ENCODE measurements at regions of chr1 and their contacts with region 1.

Region 1: GRCh38 chr1:209248649-209249279 is 334.8 kb upstream of the CAMK1G start:
- DNase-seq: peak in 1 of 2 donors; percentile 38
- ATAC-seq: peak in 3 of 8 donors; percentile 41 to 62 (median 45)
- H3K4me3 ChIP-seq: no peak overlapping the region
- H3K27ac ChIP-seq: no peak overlapping the region
- H3K4me1 ChIP-seq: no peaks in the 10 kb centered on the region
- H3K27me3 ChIP-seq: peaks cover 0 to 24% (median 3%) of the 10 kb centered on the region in 7 donors
- CTCF ChIP-seq: peak; percentile 87 to 96 (median 91)

Region 2: GRCh38 chr1:209213989-209214388 is 34.8 kb before region 1 on chr1:
- intact Hi-C with region 1: loop called in 2 of 10 experiments (anchors 5 kb)
- DNase-seq: no peak
- ATAC-seq: no peak
- H3K4me3 ChIP-seq: no peak overlapping the region
- H3K27ac ChIP-seq: no peak overlapping the region
- H3K4me1 ChIP-seq: no peaks in the 10 kb centered on the region
- H3K27me3 ChIP-seq: peaks cover 0 to 63% (median 39%) of the 10 kb centered on the region in 7 donors
- CTCF ChIP-seq: no peak

Region 3: GRCh38 chr1:209435654-209436566 is 187.1 kb after region 1 on chr1:
- intact Hi-C with region 1: loop called in 1 of 10 experiments (anchors 10 kb)
- DNase-seq: peak; percentile 52 to 62
- ATAC-seq: peak in 7 of 8 donors; percentile 47 to 74 (median 67)
- H3K4me3 ChIP-seq: no peak overlapping the region
- H3K27ac ChIP-seq: no peak overlapping the region
- H3K4me1 ChIP-seq: no peaks in the 10 kb centered on the region
- H3K27me3 ChIP-seq: peaks cover 0 to 13% (median 3%) of the 10 kb centered on the region in 7 donors
- CTCF ChIP-seq: peak; percentile 38 to 83 (median 73)